Activated CD4-positive, alpha-beta memory T cell treated with anti-CD3 and anti-CD28 coated beads for 36 hours (primary cell): ENCODE measurements at regions of chr4 and their contacts with region 1.

Region 1: GRCh38 chr4:2220016-2220630 is 21.8 kb downstream of the HAUS3 start:
- DNase-seq: peak; percentile 84
- H3K4me3 Mint-ChIP-seq: no peak overlapping the region
- H3K27ac Mint-ChIP-seq: no peak overlapping the region
- H3K4me1 Mint-ChIP-seq: peaks cover 5% of the 10 kb centered on the region
- H3K27me3 Mint-ChIP-seq: no peaks in the 10 kb centered on the region

Region 2: DNA sequence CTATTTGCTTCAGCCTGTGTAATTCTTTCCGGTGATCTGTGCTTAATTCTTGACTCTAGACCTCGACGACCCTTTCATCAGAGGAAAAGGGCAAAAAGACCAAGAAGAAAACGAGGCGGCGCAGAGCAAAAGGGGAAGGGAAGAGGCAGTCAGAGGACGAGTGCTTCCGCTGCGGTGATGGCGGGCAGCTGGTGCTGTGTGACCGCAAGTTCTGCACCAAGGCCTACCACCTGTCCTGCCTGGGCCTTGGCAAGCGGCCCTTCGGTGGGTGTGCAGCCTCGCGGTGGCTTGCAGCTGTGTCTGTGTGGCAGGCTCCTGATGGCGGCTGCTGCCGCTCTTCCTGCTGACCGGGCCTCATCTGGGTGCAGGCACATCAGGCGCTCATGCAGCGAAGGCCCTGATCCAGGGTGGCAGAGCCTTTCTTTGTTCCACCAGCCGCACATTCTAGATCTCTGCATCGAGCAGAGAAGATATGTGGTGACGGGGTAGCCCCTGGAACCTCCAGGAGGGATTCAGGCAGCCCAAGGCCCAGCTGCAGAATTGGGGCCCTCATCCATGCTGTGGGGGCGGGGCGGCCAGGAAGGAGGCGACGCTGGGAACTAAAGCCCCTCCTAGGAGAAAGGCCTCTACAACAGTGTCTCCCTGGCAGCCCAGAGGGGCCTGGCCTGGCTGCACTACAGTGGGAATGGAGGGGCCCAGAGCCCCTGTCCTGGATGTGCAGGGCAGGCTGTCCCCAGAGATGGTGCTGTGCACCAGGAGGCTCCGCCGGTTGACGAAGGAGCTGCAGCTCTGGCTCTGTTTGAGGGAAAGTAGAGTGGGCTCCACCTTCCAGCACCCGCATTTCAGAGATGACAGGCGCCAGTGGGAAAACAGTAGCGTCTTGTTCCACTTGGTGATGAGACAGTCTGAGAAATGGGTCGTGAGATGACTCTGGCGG is 243.4 kb before region 1 on chr4:
- CTCF ChIA-PET with region 1: no interaction called
- POLR2A ChIA-PET with region 1: no interaction called
- intact Hi-C with region 1: no loop called
- DNase-seq: no peak
- H3K4me3 Mint-ChIP-seq: no peak overlapping the region
- H3K27ac Mint-ChIP-seq: no peak overlapping the region
- H3K4me1 Mint-ChIP-seq: no peaks in the 10 kb centered on the region
- H3K27me3 Mint-ChIP-seq: no peaks in the 10 kb centered on the region

Region 3: GRCh38 chr4:2059034-2059725 is 160.9 kb before region 1 on chr4 and contains the start of gene NAT8L:
- CTCF ChIA-PET with region 1: no interaction called
- POLR2A ChIA-PET with region 1: no interaction called
- intact Hi-C with region 1: no loop called
- DNase-seq: peak; percentile 21
- H3K4me3 Mint-ChIP-seq: no peak within 1 kb of the TSS
- H3K27ac Mint-ChIP-seq: no peak within 1 kb of the TSS
- H3K4me1 Mint-ChIP-seq: peaks cover 2% of the 10 kb centered on the region
- H3K27me3 Mint-ChIP-seq: peaks cover 28% of the 10 kb centered on the region
- total RNA-seq, gene NAT8L: 0.19 to 0.29 TPM

Region 4: GRCh38 chr4:2231082-2231481 is 11.0 kb after region 1 on chr4:
- CTCF ChIA-PET with region 1: interaction called, 19 read pairs
- POLR2A ChIA-PET with region 1: no interaction called
- intact Hi-C with region 1: no loop called
- DNase-seq: no peak
- H3K4me3 Mint-ChIP-seq: no peak overlapping the region
- H3K27ac Mint-ChIP-seq: no peak overlapping the region
- H3K4me1 Mint-ChIP-seq: peaks cover 18% of the 10 kb centered on the region
- H3K27me3 Mint-ChIP-seq: no peaks in the 10 kb centered on the region

Region 5: GRCh38 chr4:2385516-2385915 is 165.4 kb after region 1 on chr4:
- CTCF ChIA-PET with region 1: no interaction called
- POLR2A ChIA-PET with region 1: no interaction called
- intact Hi-C with region 1: no loop called
- DNase-seq: no peak
- H3K4me3 Mint-ChIP-seq: no peak overlapping the region
- H3K27ac Mint-ChIP-seq: no peak overlapping the region
- H3K4me1 Mint-ChIP-seq: peaks cover 19% of the 10 kb centered on the region
- H3K27me3 Mint-ChIP-seq: no peaks in the 10 kb centered on the region

Region 6: DNA sequence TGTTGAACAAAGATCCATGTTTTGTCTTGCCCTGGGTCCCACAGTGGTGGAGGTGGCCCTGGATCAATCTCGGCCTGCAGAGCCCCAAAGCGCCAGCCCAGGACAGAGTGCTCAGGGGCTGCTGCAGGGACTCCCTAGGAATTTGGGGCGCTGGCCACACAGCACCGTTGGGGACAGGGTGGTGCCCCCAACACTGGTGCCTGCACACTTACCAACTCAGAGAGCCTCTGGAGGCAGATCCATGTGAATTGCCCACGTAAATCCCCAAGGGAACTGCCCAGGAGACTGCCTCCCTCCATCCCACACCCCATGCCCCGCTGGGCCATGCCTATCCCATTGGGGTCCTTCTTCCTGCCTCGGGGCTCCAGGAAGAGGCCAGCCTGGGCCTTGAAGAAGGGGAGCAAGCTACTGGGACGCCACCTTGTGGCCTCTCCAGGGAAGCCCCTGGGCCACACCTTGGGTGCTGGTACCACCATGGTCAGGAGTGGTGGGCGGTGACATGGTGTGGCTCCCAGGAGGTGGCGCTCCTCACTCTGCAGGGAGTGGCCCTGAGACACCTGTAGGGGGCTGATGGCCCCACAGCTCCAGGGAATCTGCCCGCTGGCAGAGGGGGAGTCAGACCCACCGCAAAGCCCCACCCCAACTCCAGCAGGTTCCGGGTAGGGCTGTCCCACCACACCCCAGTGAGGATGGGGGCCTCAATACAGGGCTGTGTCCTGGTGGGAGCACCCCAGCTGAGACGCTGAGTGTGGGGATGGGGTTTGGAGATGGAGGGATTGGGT is 221.5 kb after region 1 on chr4:
- CTCF ChIA-PET with region 1: interaction called, 28 read pairs
- POLR2A ChIA-PET with region 1: no interaction called
- intact Hi-C with region 1: loop called (anchors 1 kb)
- DNase-seq: peak; percentile 90
- H3K4me3 Mint-ChIP-seq: no peak overlapping the region
- H3K27ac Mint-ChIP-seq: no peak overlapping the region
- H3K4me1 Mint-ChIP-seq: peaks cover 4% of the 10 kb centered on the region
- H3K27me3 Mint-ChIP-seq: no peaks in the 10 kb centered on the region

Region 7: GRCh38 chr4:2462218-2462991 is 242.3 kb after region 1 on chr4:
- CTCF ChIA-PET with region 1: interaction called, 15 read pairs
- POLR2A ChIA-PET with region 1: no interaction called
- intact Hi-C with region 1: no loop called
- DNase-seq: peak; percentile 67
- H3K4me3 Mint-ChIP-seq: peak overlapping the region; percentile 57
- H3K27ac Mint-ChIP-seq: no peak overlapping the region
- H3K4me1 Mint-ChIP-seq: peaks cover 8% of the 10 kb centered on the region
- H3K27me3 Mint-ChIP-seq: peaks cover 1% of the 10 kb centered on the region